Gastrocnemius medialis (tissue), 4 donors: ENCODE measurements at regions of chr18 and their contacts with region 1.

Region 1: GRCh38 chr18:48153641-48154481 is 223.4 kb upstream of the SMAD2 start:
- DNase-seq: peak in 1 of 2 donors; percentile 62
- ATAC-seq: peak; percentile 47 to 73
- H3K4me3 ChIP-seq: no peak overlapping the region
- H3K27ac ChIP-seq: peak overlapping the region in 2 of 4 donors; percentile 39 to 62
- H3K4me1 ChIP-seq: no peaks in the 10 kb centered on the region
- H3K27me3 ChIP-seq: no peaks in the 10 kb centered on the region
- CTCF ChIP-seq: no peak
- POLR2A ChIP-seq: no peak

Region 2: GRCh38 chr18:48170651-48171050 is 16.8 kb after region 1 on chr18:
- in situ Hi-C with region 1: no loop called
- intact Hi-C with region 1: loop called (anchors 1 kb)
- DNase-seq: no peak
- ATAC-seq: no peak
- H3K4me3 ChIP-seq: no peak overlapping the region
- H3K27ac ChIP-seq: no peak overlapping the region
- H3K4me1 ChIP-seq: no peaks in the 10 kb centered on the region
- H3K27me3 ChIP-seq: no peaks in the 10 kb centered on the region
- CTCF ChIP-seq: no peak
- POLR2A ChIP-seq: no peak